ENCODE measurements at regions of chr17 and their contacts with region 1.

Region 1: DNA sequence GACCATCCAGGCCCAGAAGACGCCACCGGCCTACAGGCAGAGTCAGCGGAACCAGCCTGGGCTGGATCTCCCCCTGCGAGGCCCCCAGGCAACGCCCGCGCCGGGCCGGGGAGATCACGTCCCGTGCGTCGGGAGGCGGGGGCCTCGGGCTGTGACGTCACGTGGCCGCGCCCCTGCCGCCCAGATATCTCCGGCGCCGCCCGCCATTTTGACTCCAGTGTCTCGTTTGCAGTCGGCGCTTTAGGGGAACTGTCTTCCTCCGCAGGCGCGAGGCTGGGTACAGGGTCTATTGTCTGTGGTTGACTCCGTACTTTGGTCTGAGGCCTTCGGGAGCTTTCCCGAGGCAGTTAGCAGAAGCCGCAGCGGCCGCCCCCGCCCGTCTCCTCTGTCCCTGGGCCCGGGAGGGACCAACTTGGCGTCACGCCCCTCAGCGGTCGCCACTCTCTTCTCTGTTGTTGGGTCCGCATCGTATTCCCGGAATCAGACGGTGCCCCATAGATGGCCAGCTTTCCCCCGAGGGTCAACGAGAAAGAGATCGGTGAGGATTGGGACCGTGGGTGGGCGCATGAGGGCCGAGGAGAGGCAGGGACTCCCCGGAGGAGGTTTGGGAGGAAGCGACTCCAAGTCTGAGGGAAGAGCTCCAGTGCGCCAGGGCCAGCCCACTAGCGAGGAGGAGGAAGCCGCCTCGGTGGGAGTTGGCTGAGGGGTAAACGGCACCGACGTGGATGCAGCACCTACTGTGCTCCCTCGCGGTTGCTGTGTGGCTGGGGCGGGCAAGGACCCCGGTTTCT is at the start of gene WSB1:
- DNase-seq: peak; percentile 93
- ATAC-seq: peak; percentile 84
- H3K4me3 Mint-ChIP-seq: peak within 1 kb of the TSS; percentile 97
- H3K27ac Mint-ChIP-seq: peak within 1 kb of the TSS; percentile 100
- H3K4me1 Mint-ChIP-seq: peaks cover 32% of the 10 kb centered on the region
- H3K27me3 Mint-ChIP-seq: no peaks in the 10 kb centered on the region
- total RNA-seq, gene WSB1: 118 to 121 TPM

Region 2: GRCh38 chr17:27199948-27200347 is 94.1 kb before region 1 on chr17:
- CTCF ChIA-PET with region 1: no interaction called
- POLR2A ChIA-PET with region 1: no interaction called
- DNase-seq: no peak
- ATAC-seq: no peak
- H3K4me3 Mint-ChIP-seq: no peak overlapping the region
- H3K27ac Mint-ChIP-seq: no peak overlapping the region
- H3K4me1 Mint-ChIP-seq: peaks cover 6% of the 10 kb centered on the region
- H3K27me3 Mint-ChIP-seq: peaks cover 6% of the 10 kb centered on the region

Region 3: DNA sequence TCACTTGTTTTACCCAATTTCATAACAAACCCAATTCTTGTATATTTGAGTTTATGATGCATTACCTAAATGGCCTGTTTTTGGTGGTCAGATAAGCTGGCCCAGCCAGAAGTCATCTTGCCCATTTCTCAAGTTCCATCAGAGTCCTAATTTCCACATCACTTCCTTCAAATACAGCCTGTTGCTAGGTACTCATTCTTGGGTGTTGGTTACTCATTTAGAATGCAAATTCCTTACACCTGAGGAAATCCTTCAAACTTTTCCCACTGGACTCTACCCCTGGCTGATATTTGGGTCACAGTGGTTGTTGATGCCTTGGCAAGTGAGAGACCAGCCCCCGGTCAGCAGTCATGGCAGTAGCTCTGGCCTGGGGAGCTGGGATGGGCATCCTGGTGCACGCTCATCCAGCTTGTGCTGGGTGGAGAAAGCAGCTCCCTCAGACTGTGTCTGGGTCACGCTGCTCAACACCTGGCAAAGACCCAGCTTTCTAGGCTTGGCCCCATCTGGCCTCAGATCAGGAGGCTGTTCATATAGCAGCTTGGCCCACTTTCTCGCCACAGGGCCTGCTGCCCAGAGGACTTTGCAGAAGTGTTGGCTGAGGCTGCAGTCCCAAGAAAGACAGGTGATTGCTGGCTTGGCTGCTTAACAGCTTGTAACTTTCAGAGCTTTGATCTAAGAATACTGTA is 25.6 kb after region 1 on chr17:
- CTCF ChIA-PET with region 1: no interaction called
- POLR2A ChIA-PET with region 1: interaction called, 11 read pairs
- DNase-seq: peak; percentile 19
- ATAC-seq: peak; percentile 36
- H3K4me3 Mint-ChIP-seq: no peak overlapping the region
- H3K27ac Mint-ChIP-seq: no peak overlapping the region
- H3K4me1 Mint-ChIP-seq: no peaks in the 10 kb centered on the region
- H3K27me3 Mint-ChIP-seq: no peaks in the 10 kb centered on the region

Region 4: GRCh38 chr17:27332485-27333409 is 38.7 kb after region 1 on chr17:
- CTCF ChIA-PET with region 1: interaction called, 8 read pairs
- POLR2A ChIA-PET with region 1: interaction called, 37 read pairs
- DNase-seq: peak; percentile 92
- ATAC-seq: peak; percentile 98
- H3K4me3 Mint-ChIP-seq: peak overlapping the region; percentile 66
- H3K27ac Mint-ChIP-seq: peak overlapping the region; percentile 75
- H3K4me1 Mint-ChIP-seq: peaks cover 21% of the 10 kb centered on the region
- H3K27me3 Mint-ChIP-seq: no peaks in the 10 kb centered on the region

Region 5: GRCh38 chr17:27353461-27354050 is 59.5 kb after region 1 on chr17:
- CTCF ChIA-PET with region 1: interaction called, 12 read pairs
- POLR2A ChIA-PET with region 1: no interaction called
- DNase-seq: peak; percentile 92
- ATAC-seq: peak; percentile 95
- H3K4me3 Mint-ChIP-seq: peak overlapping the region; percentile 81
- H3K27ac Mint-ChIP-seq: peak overlapping the region; percentile 95
- H3K4me1 Mint-ChIP-seq: peaks cover 24% of the 10 kb centered on the region
- H3K27me3 Mint-ChIP-seq: no peaks in the 10 kb centered on the region

Region 6: GRCh38 chr17:27473748-27474609 is 179.9 kb after region 1 on chr17:
- CTCF ChIA-PET with region 1: no interaction called
- POLR2A ChIA-PET with region 1: interaction called, 13 read pairs
- DNase-seq: peak; percentile 85
- ATAC-seq: peak; percentile 50
- H3K4me3 Mint-ChIP-seq: peak overlapping the region; percentile 69
- H3K27ac Mint-ChIP-seq: peak overlapping the region; percentile 98
- H3K4me1 Mint-ChIP-seq: peaks cover 96% of the 10 kb centered on the region
- H3K27me3 Mint-ChIP-seq: no peaks in the 10 kb centered on the region

Region 7: DNA sequence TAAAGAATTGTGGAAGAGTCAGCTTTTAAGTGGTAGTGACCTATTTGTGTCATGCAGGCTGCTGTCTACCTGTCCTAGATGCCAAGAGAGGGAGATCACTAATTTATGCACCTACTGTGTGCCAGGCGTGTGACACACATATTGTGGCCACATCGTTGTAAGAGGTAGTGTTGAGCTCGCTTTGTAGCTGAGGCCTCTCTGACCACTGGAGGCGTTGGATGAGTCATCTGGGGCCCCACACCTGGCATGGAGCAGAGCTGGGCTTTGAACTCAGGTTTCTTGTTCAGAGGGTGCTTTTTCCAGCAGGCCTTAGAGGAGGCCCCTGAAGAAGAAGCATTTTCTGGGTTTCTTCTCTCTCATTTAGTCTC is 284.6 kb after region 1 on chr17:
- CTCF ChIA-PET with region 1: no interaction called
- POLR2A ChIA-PET with region 1: interaction called, 14 read pairs
- DNase-seq: peak; percentile 70
- ATAC-seq: peak; percentile 81
- H3K4me3 Mint-ChIP-seq: no peak overlapping the region
- H3K27ac Mint-ChIP-seq: peak overlapping the region; percentile 86
- H3K4me1 Mint-ChIP-seq: peaks cover 79% of the 10 kb centered on the region
- H3K27me3 Mint-ChIP-seq: no peaks in the 10 kb centered on the region